ENCODE measurements at regions of chr1 and their contacts with region 1.

Region 1: DNA sequence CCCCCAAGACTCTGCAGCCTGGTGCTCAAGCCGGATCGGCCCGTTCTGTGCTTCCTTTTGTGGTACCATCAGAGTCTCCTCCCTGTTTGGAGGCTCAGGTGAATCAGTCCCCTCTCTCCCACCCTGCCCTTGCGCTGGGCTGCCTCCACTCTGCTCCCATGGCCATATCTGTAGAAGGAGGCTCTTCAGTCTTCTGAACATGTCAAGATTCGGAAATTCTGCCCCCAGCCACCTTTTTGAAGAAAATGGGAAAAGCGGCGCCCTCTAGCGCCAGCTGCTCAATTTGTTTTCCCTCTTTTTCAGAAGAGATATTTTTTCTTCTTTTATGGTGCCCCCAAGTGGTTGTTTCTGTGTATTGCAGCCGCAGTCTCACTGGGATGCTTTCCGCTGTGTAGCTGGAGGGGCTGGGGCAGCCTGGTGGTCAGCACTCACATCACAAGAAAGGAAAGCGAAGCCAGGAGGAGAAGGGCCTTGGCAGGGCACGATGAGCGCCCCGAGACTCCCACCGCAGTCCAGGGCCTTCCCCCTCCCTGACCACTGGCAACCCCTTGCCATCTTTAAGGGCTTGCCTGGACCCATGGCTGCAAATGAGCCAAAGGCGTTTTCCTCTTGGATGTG is 58.4 kb upstream of the CACNA1E start:
- DNase-seq: peak; percentile 71
- ATAC-seq: peak; percentile 92
- H3K4me3 ChIP-seq: no peak overlapping the region
- H3K27ac ChIP-seq: no peak overlapping the region
- H3K4me1 ChIP-seq: no peaks in the 10 kb centered on the region
- H3K27me3 ChIP-seq: no peaks in the 10 kb centered on the region
- CTCF ChIP-seq: peak; percentile 90
- EP300 ChIP-seq: no peak
- POLR2A ChIP-seq: no peak
- RAD21 ChIP-seq: peak; percentile 71

Region 2: GRCh38 chr1:181189691-181190363 is 235.1 kb before region 1 on chr1:
- CTCF ChIA-PET with region 1: interaction called, 74 read pairs
- POLR2A ChIA-PET with region 1: interaction called, 4 read pairs
- in situ Hi-C with region 1: loop called (anchors 5 kb)
- intact Hi-C with region 1: loop called (anchors 1 kb)
- DNase-seq: peak; percentile 20
- ATAC-seq: peak; percentile 98
- H3K4me3 ChIP-seq: peak overlapping the region; percentile 21 to 49 (median 27); a peak in 4 of 6 replicates
- H3K27ac ChIP-seq: no peak overlapping the region
- H3K4me1 ChIP-seq: peaks cover 5% of the 10 kb centered on the region; the same call in 1 of the 2 replicates
- H3K27me3 ChIP-seq: peaks cover 3 to 18% of the 10 kb centered on the region in 2 experiments; a peak in 2 of 5 replicates
- CTCF ChIP-seq: peak; percentile 94
- EP300 ChIP-seq: no peak
- POLR2A ChIP-seq: no peak
- RAD21 ChIP-seq: peak; percentile 93